GM12878 (cell line): ENCODE measurements at regions of chr18 and their contacts with region 1.

Region 1: GRCh38 chr18:4319738-4320677 is 135.1 kb downstream of the DLGAP1 start:
- DNase-seq: peak; percentile 64
- ATAC-seq: peak; percentile 91
- H3K4me3 ChIP-seq: no peak overlapping the region
- H3K27ac ChIP-seq: no peak overlapping the region; the same call in 1 of the 2 replicates
- H3K4me1 ChIP-seq: no peaks in the 10 kb centered on the region
- H3K27me3 ChIP-seq: no peaks in the 10 kb centered on the region
- CTCF ChIP-seq: no peak
- EP300 ChIP-seq: peak; percentile 88 to 90; a peak in 3 of 4 replicates
- POLR2A ChIP-seq: no peak
- RAD21 ChIP-seq: no peak

Region 2: DNA sequence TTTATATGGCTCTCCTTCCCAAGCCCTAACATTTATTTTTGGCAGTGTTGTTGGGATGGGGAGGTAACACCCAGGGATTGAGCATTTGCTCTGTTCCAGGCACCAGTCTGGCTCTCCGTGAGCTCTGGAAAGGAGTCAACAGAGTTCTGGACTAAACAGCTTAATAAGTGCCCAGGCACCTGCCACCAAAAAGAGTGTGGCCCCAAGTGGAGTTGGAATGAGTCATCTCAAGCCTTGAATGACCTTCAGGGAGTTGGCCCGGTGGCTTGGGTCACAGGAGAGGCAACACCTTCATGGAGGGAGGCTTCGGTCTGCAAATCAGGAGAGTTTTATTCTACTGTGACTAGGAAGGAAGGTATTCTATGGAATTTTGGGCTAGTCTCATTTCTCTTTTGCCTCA is 68.1 kb before region 1 on chr18:
- CTCF ChIA-PET with region 1: interaction called, 3 read pairs
- POLR2A ChIA-PET with region 1: interaction called, 5 read pairs
- RAD21 ChIA-PET with region 1: interaction called, 4 read pairs
- SMC1A ChIA-PET with region 1: interaction called, 27 read pairs
- in situ Hi-C with region 1: no loop called
- intact Hi-C with region 1: no loop called
- DNase-seq: no peak
- ATAC-seq: peak; percentile 75
- H3K4me3 ChIP-seq: no peak overlapping the region
- H3K27ac ChIP-seq: no peak overlapping the region
- H3K4me1 ChIP-seq: no peaks in the 10 kb centered on the region; the same call in 1 of the 2 replicates
- H3K27me3 ChIP-seq: no peaks in the 10 kb centered on the region
- CTCF ChIP-seq: no peak
- EP300 ChIP-seq: peak; percentile 33 to 40; a peak in 2 of 4 replicates
- POLR2A ChIP-seq: no peak
- RAD21 ChIP-seq: no peak

Region 3: GRCh38 chr18:4283746-4284291 is 36.2 kb before region 1 on chr18:
- CTCF ChIA-PET with region 1: interaction called, 3 read pairs
- POLR2A ChIA-PET with region 1: interaction called, 5 read pairs
- RAD21 ChIA-PET with region 1: interaction called, 11 read pairs
- SMC1A ChIA-PET with region 1: interaction called, 22 read pairs
- in situ Hi-C with region 1: no loop called
- intact Hi-C with region 1: no loop called
- DNase-seq: no peak
- ATAC-seq: peak; percentile 45
- H3K4me3 ChIP-seq: no peak overlapping the region
- H3K27ac ChIP-seq: no peak overlapping the region
- H3K4me1 ChIP-seq: no peaks in the 10 kb centered on the region
- H3K27me3 ChIP-seq: no peaks in the 10 kb centered on the region
- CTCF ChIP-seq: no peak
- EP300 ChIP-seq: no peak
- POLR2A ChIP-seq: no peak
- RAD21 ChIP-seq: no peak

Region 4: GRCh38 chr18:4333043-4333442 is 13.0 kb after region 1 on chr18:
- CTCF ChIA-PET with region 1: interaction called, 3 read pairs
- POLR2A ChIA-PET with region 1: interaction called, 9 read pairs
- RAD21 ChIA-PET with region 1: interaction called, 6 read pairs
- SMC1A ChIA-PET with region 1: interaction called, 11 read pairs
- in situ Hi-C with region 1: no loop called
- intact Hi-C with region 1: no loop called
- DNase-seq: no peak
- ATAC-seq: peak; percentile 17; the same call in 2 of the 3 replicates
- H3K4me3 ChIP-seq: no peak overlapping the region
- H3K27ac ChIP-seq: no peak overlapping the region
- H3K4me1 ChIP-seq: no peaks in the 10 kb centered on the region
- H3K27me3 ChIP-seq: no peaks in the 10 kb centered on the region
- CTCF ChIP-seq: no peak
- EP300 ChIP-seq: no peak
- POLR2A ChIP-seq: no peak
- RAD21 ChIP-seq: no peak

Region 5: GRCh38 chr18:4384932-4385331 is 64.9 kb after region 1 on chr18:
- CTCF ChIA-PET with region 1: no interaction called
- POLR2A ChIA-PET with region 1: interaction called, 3 read pairs
- RAD21 ChIA-PET with region 1: interaction called, 8 read pairs
- SMC1A ChIA-PET with region 1: interaction called, 12 read pairs
- in situ Hi-C with region 1: no loop called
- intact Hi-C with region 1: loop called (anchors 2 kb)
- DNase-seq: no peak
- ATAC-seq: peak; percentile 88
- H3K4me3 ChIP-seq: no peak overlapping the region
- H3K27ac ChIP-seq: no peak overlapping the region
- H3K4me1 ChIP-seq: no peaks in the 10 kb centered on the region
- H3K27me3 ChIP-seq: no peaks in the 10 kb centered on the region
- CTCF ChIP-seq: no peak
- EP300 ChIP-seq: peak; percentile 40; a peak in 2 of 4 replicates
- POLR2A ChIP-seq: no peak
- RAD21 ChIP-seq: no peak

Region 6: GRCh38 chr18:4450065-4450658 is 130.2 kb after region 1 on chr18:
- CTCF ChIA-PET with region 1: interaction called, 4 read pairs
- POLR2A ChIA-PET with region 1: interaction called, 4 read pairs
- RAD21 ChIA-PET with region 1: interaction called, 27 read pairs
- SMC1A ChIA-PET with region 1: interaction called, 5 read pairs
- in situ Hi-C with region 1: no loop called
- intact Hi-C with region 1: loop called (anchors 5 kb)
- DNase-seq: no peak
- ATAC-seq: peak; percentile 13
- H3K4me3 ChIP-seq: no peak overlapping the region
- H3K27ac ChIP-seq: no peak overlapping the region
- H3K4me1 ChIP-seq: no peaks in the 10 kb centered on the region
- H3K27me3 ChIP-seq: no peaks in the 10 kb centered on the region
- CTCF ChIP-seq: peak in 2 of 3 experiments; percentile 4 to 43; a peak in 2 of 6 replicates
- EP300 ChIP-seq: no peak
- POLR2A ChIP-seq: no peak
- RAD21 ChIP-seq: no peak

Region 7: GRCh38 chr18:4639628-4640310 is 319.8 kb after region 1 on chr18:
- CTCF ChIA-PET with region 1: no interaction called
- POLR2A ChIA-PET with region 1: no interaction called
- RAD21 ChIA-PET with region 1: interaction called, 3 read pairs
- SMC1A ChIA-PET with region 1: interaction called, 7 read pairs
- in situ Hi-C with region 1: no loop called
- intact Hi-C with region 1: loop called (anchors 1 kb)
- DNase-seq: peak; percentile 97
- ATAC-seq: peak; percentile 93
- H3K4me3 ChIP-seq: no peak overlapping the region
- H3K27ac ChIP-seq: peak overlapping the region; percentile 66
- H3K4me1 ChIP-seq: peaks cover 3% of the 10 kb centered on the region
- H3K27me3 ChIP-seq: no peaks in the 10 kb centered on the region
- CTCF ChIP-seq: no peak
- EP300 ChIP-seq: peak; percentile 96 to 97
- POLR2A ChIP-seq: no peak
- RAD21 ChIP-seq: no peak